ENCODE measurements at regions of chr2 and their contacts with region 1.

Region 1: GRCh38 chr2:147297820-147298219 is 547.0 kb upstream of the ACVR2A start:
- DNase-seq: peak; percentile 58
- H3K4me3 Mint-ChIP-seq: peak overlapping the region; percentile 39
- H3K27ac Mint-ChIP-seq: peak overlapping the region; percentile 89
- H3K4me1 Mint-ChIP-seq: peaks cover 73% of the 10 kb centered on the region
- H3K27me3 Mint-ChIP-seq: no peaks in the 10 kb centered on the region

Region 2: DNA sequence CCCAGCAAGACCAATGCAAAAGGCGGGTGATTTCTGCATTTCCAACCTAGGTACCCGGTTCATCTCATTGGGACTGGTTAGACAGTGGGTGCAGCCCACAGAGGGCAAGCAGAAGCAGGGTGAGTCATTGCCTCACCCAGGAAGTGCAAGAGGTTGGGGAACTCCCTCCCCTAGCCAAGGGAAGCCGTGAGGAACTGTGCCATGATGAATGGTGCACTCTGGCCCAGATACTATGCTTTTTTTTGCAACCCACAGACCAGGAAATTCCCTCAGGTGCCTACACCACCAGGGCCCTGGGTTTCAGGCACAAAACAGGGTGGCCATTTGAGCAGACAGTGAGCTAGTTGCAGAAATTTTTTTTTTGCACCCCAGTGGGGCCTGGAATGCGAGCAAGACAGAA is 115.6 kb before region 1 on chr2:
- CTCF ChIA-PET with region 1: no interaction called
- POLR2A ChIA-PET with region 1: interaction called, 3 read pairs
- intact Hi-C with region 1: loop called (anchors 1 kb)
- DNase-seq: peak; percentile 82
- H3K4me3 Mint-ChIP-seq: no peak overlapping the region
- H3K27ac Mint-ChIP-seq: peak overlapping the region; percentile 77
- H3K4me1 Mint-ChIP-seq: peaks cover 29% of the 10 kb centered on the region
- H3K27me3 Mint-ChIP-seq: no peaks in the 10 kb centered on the region

Region 3: GRCh38 chr2:147214914-147215313 is 82.9 kb before region 1 on chr2:
- CTCF ChIA-PET with region 1: no interaction called
- POLR2A ChIA-PET with region 1: no interaction called
- intact Hi-C with region 1: no loop called
- DNase-seq: no peak
- H3K4me3 Mint-ChIP-seq: no peak overlapping the region
- H3K27ac Mint-ChIP-seq: no peak overlapping the region
- H3K4me1 Mint-ChIP-seq: no peaks in the 10 kb centered on the region
- H3K27me3 Mint-ChIP-seq: no peaks in the 10 kb centered on the region

Region 4: GRCh38 chr2:147311058-147311430 is 13.2 kb after region 1 on chr2:
- CTCF ChIA-PET with region 1: no interaction called
- POLR2A ChIA-PET with region 1: no interaction called
- intact Hi-C with region 1: loop called (anchors 2 kb)
- DNase-seq: no peak
- H3K4me3 Mint-ChIP-seq: no peak overlapping the region
- H3K27ac Mint-ChIP-seq: no peak overlapping the region
- H3K4me1 Mint-ChIP-seq: peaks cover 12% of the 10 kb centered on the region
- H3K27me3 Mint-ChIP-seq: peaks cover 4% of the 10 kb centered on the region

Region 5: DNA sequence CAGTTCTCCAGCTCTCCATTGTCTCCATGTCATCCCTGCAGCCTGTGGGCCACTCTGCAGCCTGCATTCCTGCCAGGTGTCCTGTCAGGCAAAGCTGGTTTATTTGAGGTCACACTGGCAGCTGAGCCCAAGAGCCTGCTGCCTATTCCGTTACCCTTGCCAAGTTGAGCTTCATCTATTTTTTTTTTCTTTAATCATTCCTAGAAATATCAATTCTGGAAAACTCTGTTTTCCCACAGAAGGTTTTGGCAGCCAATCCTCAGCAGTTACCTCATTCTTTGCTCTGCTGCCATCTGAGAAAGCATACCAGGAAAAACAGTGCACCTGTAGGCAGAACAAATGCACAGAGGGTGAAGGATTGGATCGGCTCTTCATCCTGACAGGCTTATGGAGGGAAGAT is 136.0 kb after region 1 on chr2:
- CTCF ChIA-PET with region 1: no interaction called
- POLR2A ChIA-PET with region 1: no interaction called
- intact Hi-C with region 1: no loop called
- DNase-seq: no peak
- H3K4me3 Mint-ChIP-seq: no peak overlapping the region
- H3K27ac Mint-ChIP-seq: no peak overlapping the region
- H3K4me1 Mint-ChIP-seq: no peaks in the 10 kb centered on the region
- H3K27me3 Mint-ChIP-seq: no peaks in the 10 kb centered on the region

Region 6: DNA sequence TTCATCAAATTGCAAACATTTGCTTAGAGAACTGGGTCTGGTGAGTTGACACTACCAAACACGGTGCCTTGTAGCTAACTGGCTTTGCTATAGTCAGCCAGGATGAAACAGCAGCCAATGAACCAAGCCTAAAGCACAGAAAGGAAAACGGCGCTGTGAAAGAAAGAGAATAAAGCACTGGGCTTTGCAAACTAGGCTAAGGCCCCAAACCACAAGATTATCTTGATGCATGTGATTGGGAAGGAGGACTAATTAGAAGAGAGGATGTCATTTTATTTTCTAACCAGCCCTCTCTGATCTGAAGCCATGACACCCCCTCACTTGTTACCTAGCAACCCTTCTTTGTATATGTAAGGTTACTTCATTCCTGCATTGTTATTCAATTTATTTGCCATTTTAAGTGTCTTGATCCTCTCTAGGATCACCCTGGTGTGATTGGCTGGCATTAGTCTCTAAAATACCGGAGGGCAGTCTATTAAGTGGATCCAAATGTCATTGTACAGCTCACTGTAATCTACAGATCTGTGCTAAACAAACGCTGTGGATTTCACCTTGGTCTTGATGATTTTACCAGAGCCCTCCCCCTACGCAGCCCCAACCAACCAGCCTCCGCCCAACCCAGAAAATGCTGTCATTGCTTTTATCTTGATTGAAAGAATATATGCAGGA is 151.6 kb after region 1 on chr2:
- CTCF ChIA-PET with region 1: no interaction called
- POLR2A ChIA-PET with region 1: no interaction called
- intact Hi-C with region 1: loop called (anchors 5 kb)
- DNase-seq: peak; percentile 53
- H3K4me3 Mint-ChIP-seq: peak overlapping the region; percentile 27
- H3K27ac Mint-ChIP-seq: peak overlapping the region; percentile 68
- H3K4me1 Mint-ChIP-seq: peaks cover 17% of the 10 kb centered on the region
- H3K27me3 Mint-ChIP-seq: no peaks in the 10 kb centered on the region

Region 7: DNA sequence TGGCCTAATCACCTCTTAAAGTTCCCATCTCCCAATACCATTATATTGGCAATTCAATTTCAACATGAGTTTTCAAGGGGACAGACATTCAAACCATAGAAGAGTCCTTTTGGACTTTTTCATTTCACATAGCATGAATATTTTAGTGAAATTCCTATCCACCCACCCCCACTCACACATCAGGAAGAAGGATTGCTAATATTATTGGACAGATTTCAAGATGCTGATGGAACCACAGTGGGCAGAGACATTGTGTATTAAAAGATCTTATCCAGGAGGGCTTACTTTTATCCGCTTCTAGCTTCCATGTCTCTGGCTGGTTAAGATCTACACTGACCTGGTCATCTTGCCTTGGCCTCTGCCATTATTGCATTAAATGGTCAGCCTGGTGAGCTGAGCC is 249.6 kb after region 1 on chr2:
- CTCF ChIA-PET with region 1: no interaction called
- POLR2A ChIA-PET with region 1: no interaction called
- intact Hi-C with region 1: no loop called
- DNase-seq: no peak
- H3K4me3 Mint-ChIP-seq: no peak overlapping the region
- H3K27ac Mint-ChIP-seq: no peak overlapping the region
- H3K4me1 Mint-ChIP-seq: no peaks in the 10 kb centered on the region
- H3K27me3 Mint-ChIP-seq: no peaks in the 10 kb centered on the region

Region 8: DNA sequence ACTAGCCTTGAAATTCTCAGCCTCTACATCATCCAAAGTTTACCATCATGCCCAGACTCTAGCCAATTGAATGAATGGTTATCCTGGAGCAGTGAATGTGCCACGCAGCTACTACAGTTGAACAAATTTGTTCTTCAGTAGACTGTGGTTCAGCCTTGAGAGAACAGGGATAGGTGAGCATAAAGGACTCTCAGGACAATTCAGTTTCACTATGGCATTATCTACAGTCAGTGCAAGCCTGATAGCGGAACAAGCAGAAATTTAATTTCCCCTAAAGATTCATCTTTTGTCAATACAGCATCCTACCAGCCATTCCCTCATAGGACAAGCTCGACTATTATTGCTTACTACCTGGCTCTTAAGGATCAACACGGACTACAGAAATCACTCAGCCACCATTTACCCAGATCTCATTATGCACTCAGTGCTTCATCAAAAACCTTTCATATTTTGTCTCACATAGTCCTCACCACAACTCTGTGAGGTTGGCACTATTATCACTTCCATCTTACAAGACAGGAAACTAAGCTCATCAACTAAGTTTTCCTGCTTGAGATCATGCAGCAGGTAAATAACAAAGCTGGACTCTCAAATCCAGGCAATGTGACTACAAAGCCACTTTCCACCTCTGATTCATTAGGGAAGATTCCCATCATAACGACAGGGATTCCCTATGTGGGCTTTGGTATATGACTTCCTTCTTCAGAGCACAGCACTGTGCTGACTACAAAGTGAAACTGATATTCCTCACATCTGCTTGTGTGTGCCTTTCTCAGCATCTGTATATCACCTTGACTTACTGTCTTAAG is 365.5 kb after region 1 on chr2:
- CTCF ChIA-PET with region 1: no interaction called
- POLR2A ChIA-PET with region 1: no interaction called
- intact Hi-C with region 1: loop called (anchors 1 kb)
- DNase-seq: peak; percentile 10
- H3K4me3 Mint-ChIP-seq: peak overlapping the region; percentile 51
- H3K27ac Mint-ChIP-seq: peak overlapping the region; percentile 82
- H3K4me1 Mint-ChIP-seq: peaks cover 24% of the 10 kb centered on the region
- H3K27me3 Mint-ChIP-seq: no peaks in the 10 kb centered on the region